ENCODE measurements at regions of chr10 and their contacts with region 1.

Region 1: DNA sequence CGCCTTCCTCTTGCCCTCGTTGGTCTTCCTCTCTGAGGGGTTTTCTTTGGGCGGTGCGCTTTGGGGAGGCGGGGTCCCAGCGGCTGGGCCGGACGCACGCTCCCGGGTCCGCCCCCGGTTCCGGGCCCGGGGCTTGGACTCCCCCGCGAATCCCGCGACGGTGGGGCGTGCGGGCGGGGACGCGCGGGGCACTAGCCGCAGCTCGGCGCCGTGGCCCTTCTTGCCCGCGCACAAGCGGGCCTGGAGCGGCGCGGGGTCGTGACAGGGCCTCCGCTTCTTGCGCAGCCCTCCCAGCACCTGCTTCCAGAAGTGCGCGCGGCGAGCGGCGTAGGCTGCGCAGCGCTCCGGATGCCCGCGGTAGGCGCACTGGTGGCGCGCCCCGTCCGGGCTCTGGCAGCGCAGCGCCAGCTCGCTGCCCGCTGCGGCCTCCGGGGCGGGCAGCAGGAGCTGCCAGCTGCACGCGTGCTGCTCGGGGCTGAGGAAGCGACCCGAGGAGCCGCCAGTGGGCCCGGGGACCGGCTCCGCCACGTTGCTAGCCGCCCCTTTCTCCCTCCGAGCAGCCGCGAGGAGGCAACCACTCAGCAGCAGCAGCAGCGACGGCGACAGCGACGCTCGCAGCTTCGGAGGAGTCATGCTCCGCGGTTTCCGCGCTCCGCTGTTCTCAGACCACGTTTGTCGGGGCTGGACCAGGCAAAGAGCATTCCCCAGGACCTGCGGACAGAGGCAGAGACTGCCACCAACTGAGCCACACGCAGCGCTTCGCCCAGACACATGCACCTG is 759 bp downstream of the FGFBP3 start:
- H3K4me3 Mint-ChIP-seq: peak overlapping the region; percentile 83
- H3K27ac Mint-ChIP-seq: peak overlapping the region; percentile 51
- H3K4me1 Mint-ChIP-seq: peaks cover 18% of the 10 kb centered on the region
- H3K27me3 Mint-ChIP-seq: peaks cover 2% of the 10 kb centered on the region

Region 2: GRCh38 chr10:91389636-91390512 is 518.7 kb before region 1 on chr10:
- intact Hi-C with region 1: loop called (anchors 2 kb)
- H3K4me3 Mint-ChIP-seq: no peak overlapping the region
- H3K27ac Mint-ChIP-seq: no peak overlapping the region
- H3K4me1 Mint-ChIP-seq: no peaks in the 10 kb centered on the region
- H3K27me3 Mint-ChIP-seq: peaks cover 18% of the 10 kb centered on the region

Region 3: DNA sequence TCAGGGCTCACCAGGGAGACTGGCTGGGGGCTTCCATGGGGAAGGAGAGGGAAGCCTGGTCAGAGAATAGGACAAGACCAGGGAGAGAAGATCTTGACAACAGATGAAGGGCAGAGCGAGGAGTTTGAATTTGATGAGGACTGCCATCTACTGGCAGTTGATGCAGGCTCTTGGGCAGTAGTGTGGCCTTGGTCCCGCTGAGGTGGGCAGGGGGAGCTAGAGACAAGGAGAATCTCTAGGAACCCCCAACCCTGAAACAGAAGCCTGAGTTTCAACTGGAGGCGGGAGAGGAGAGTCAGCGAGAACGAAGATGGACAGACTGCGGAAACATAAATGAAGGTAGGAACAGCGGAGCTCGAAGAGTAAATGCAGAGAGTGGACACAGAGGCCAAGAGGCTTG is 356.7 kb before region 1 on chr10:
- intact Hi-C with region 1: loop called (anchors 10 kb)
- H3K4me3 Mint-ChIP-seq: no peak overlapping the region
- H3K27ac Mint-ChIP-seq: no peak overlapping the region
- H3K4me1 Mint-ChIP-seq: no peaks in the 10 kb centered on the region
- H3K27me3 Mint-ChIP-seq: peaks cover 4% of the 10 kb centered on the region

Region 4: GRCh38 chr10:91758303-91759146 is 150.0 kb before region 1 on chr10:
- intact Hi-C with region 1: loop called (anchors 1 kb)
- H3K4me3 Mint-ChIP-seq: no peak overlapping the region
- H3K27ac Mint-ChIP-seq: no peak overlapping the region
- H3K4me1 Mint-ChIP-seq: peaks cover 19% of the 10 kb centered on the region
- H3K27me3 Mint-ChIP-seq: no peaks in the 10 kb centered on the region

Region 5: DNA sequence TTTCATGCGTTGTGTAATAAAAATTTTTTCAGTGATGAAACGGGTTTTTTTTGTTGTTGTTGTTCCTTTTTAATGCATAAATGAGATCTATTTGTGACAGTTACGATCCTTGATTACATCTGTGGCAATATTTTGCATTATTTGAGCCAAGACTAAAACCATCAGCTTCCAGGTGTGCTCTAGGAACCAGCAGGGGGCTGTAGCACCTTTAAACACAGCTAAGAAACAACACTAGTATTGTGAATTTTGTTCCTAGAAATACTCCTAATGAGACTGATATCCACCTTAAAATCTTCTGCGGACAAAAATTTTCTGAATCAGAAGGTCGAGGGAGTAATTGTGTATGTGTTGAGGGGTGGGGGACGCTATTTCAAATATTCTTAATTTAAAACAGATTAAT is 51.9 kb before region 1 on chr10:
- intact Hi-C with region 1: loop called (anchors 5 kb)
- H3K4me3 Mint-ChIP-seq: no peak overlapping the region
- H3K27ac Mint-ChIP-seq: no peak overlapping the region
- H3K4me1 Mint-ChIP-seq: no peaks in the 10 kb centered on the region
- H3K27me3 Mint-ChIP-seq: no peaks in the 10 kb centered on the region